Activated naive CD4-positive, alpha-beta T cell treated with anti-CD3 and anti-CD28 coated beads, Interleukin-2, amount 10 ng/mL, durations not matched to agents 7 days and 5 days (primary cell): ENCODE measurements at regions of chr17 and their contacts with region 1.

Region 1: GRCh38 chr17:4420692-4421131 is 13.0 kb upstream of the SPNS3 start:
- DNase-seq: peak; percentile 75
- H3K4me3 Mint-ChIP-seq: no peak overlapping the region
- H3K27ac Mint-ChIP-seq: no peak overlapping the region
- H3K4me1 Mint-ChIP-seq: peaks cover 5% of the 10 kb centered on the region
- H3K27me3 Mint-ChIP-seq: peaks cover 11% of the 10 kb centered on the region

Region 2: DNA sequence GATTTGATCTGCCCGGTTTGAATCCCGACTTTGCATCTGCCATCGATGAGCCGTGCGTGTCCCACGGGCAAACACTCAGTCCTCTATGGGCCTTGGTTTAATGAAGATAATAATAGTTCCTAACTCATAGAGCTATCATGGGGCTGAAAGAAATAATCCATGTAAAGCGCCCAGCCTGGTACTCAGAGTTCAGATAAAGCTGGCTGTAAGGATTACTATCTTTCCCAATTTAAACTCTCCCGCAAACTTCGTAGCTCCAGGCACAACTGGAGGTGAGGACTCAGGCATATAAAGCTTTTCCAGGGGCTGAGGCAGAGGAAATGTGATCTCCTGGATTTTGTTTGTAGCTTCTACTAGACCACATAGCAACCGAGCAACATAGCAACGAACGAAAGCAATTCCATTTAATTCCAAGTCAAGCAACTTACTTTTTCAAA is 204.5 kb after region 1 on chr17:
- CTCF ChIA-PET with region 1: interaction called, 32 read pairs
- DNase-seq: no peak
- H3K4me3 Mint-ChIP-seq: no peak overlapping the region
- H3K27ac Mint-ChIP-seq: no peak overlapping the region
- H3K4me1 Mint-ChIP-seq: no peaks in the 10 kb centered on the region
- H3K27me3 Mint-ChIP-seq: peaks cover 31% of the 10 kb centered on the region